ENCODE measurements at regions of chr9 and their contacts with region 1.

Region 1: GRCh38 chr9:27247756-27248155 is 49.2 kb downstream of the EQTN start:
- DNase-seq: peak; percentile 62
- H3K4me3 Mint-ChIP-seq: no peak overlapping the region
- H3K27ac Mint-ChIP-seq: no peak overlapping the region
- H3K4me1 Mint-ChIP-seq: no peaks in the 10 kb centered on the region
- H3K27me3 Mint-ChIP-seq: peaks cover 3% of the 10 kb centered on the region

Region 2: GRCh38 chr9:27276193-27277030 is 28.7 kb after region 1 on chr9:
- intact Hi-C with region 1: loop called (anchors 1 kb)
- DNase-seq: peak; percentile 61
- H3K4me3 Mint-ChIP-seq: no peak overlapping the region
- H3K27ac Mint-ChIP-seq: no peak overlapping the region
- H3K4me1 Mint-ChIP-seq: peaks cover 5% of the 10 kb centered on the region
- H3K27me3 Mint-ChIP-seq: peaks cover 6% of the 10 kb centered on the region

Measured in activated CD4-positive, alpha-beta T cell treated with anti-CD3 and anti-CD28 coated beads, Interleukin-2, amount 10 ng/mL, durations not matched to agents 24 days and 14 days (primary cell).